ENCODE measurements at regions of chr11 and their contacts with region 1.

Region 1: DNA sequence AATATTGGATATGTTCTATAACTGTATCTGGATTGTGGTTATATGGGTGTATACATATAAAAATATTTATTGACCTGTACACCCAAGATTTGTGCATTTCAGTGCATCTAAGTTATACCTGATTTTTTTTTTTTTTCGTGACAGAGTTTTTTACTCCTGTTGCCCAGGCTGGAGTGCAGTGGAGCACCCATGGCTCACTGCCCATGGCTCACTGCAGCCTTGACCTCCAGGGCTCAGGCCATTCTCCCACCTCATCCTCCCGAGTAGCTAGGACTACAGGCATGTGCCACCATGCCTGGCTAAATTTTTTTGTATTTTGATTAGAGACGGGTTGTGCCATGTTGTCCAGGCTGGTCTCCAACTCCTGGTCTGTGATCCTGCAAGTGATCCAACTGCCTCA is 24.3 kb downstream of the ATG13 start:
- DNase-seq: no peak
- H3K4me3 ChIP-seq: no peak overlapping the region
- H3K27ac ChIP-seq: no peak overlapping the region
- H3K4me1 ChIP-seq: no peaks in the 10 kb centered on the region
- H3K27me3 ChIP-seq: no peaks in the 10 kb centered on the region
- CTCF ChIP-seq: no peak

Region 2: GRCh38 chr11:46469926-46470325 is 171.7 kb before region 1 on chr11:
- CTCF ChIA-PET with region 1: no interaction called
- POLR2A ChIA-PET with region 1: no interaction called
- intact Hi-C with region 1: no loop called
- DNase-seq: peak in 1 of 2 experiments; percentile 13
- H3K4me3 ChIP-seq: no peak overlapping the region
- H3K27ac ChIP-seq: no peak overlapping the region
- H3K4me1 ChIP-seq: peaks cover 26% of the 10 kb centered on the region
- H3K27me3 ChIP-seq: no peaks in the 10 kb centered on the region
- CTCF ChIP-seq: no peak

Region 3: DNA sequence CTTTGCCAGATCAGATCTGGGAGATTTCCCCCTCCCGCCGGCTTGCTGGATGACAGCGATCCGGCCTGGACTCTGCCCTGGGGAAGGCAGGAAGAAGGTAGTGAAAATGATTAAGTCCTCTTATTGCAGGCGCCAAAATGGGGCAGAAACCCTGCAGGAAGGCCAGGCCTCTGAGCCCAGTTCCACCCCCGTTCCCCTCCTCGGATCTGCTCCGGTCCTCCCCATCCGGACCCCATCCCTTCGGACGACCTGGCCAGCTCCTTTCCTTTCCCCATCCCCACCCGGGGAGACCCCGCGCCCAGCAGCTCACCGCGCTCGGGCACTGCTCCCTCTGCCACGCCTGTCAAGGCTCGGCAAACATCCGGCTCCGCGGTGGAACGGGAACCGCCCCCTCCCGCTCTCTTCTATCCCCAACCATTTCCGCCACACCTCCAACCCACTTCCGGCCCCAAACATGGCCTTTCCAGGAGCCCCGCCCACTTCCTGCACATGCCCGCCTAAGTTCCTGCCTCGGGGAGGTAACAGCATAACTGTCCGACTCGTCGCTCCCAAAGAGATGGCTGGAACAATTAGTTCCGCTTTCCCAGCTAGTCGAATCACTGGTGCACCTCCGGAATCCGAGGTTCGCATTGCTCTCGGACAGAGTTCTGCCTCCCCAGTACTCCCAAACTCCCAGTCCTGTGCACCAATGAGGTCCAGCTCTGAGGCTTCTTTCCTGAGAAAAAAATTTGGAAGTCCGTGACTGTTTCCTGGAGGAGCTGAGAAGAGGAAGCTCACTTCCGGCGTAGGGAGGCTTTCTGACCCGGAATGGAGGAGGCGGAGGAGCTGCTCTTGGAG is 58.8 kb after region 1 on chr11 and contains the starts of genes ARHGAP1 and ZNF408:
- CTCF ChIA-PET with region 1: no interaction called
- POLR2A ChIA-PET with region 1: interaction called, 15 read pairs
- intact Hi-C with region 1: no loop called
- DNase-seq: peak; percentile 96 to 99
- H3K4me3 ChIP-seq: peak within 1 kb of the TSS; percentile 61
- H3K27ac ChIP-seq: peak within 1 kb of the TSS; percentile 64
- H3K4me1 ChIP-seq: peaks cover 13% of the 10 kb centered on the region
- H3K27me3 ChIP-seq: no peaks in the 10 kb centered on the region
- CTCF ChIP-seq: no peak
- total RNA-seq, gene ARHGAP1: 60.3 and 64.2 TPM in 2 replicates
- total RNA-seq, gene ZNF408: 13.8 and 16.2 TPM in 2 replicates

Region 4: GRCh38 chr11:46710821-46711269 is 69.2 kb after region 1 on chr11:
- CTCF ChIA-PET with region 1: no interaction called
- POLR2A ChIA-PET with region 1: no interaction called
- intact Hi-C with region 1: no loop called
- DNase-seq: no peak
- H3K4me3 ChIP-seq: no peak overlapping the region
- H3K27ac ChIP-seq: no peak overlapping the region
- H3K4me1 ChIP-seq: peaks cover 14% of the 10 kb centered on the region
- H3K27me3 ChIP-seq: no peaks in the 10 kb centered on the region
- CTCF ChIP-seq: no peak

Region 5: GRCh38 chr11:46721286-46721685 is 79.6 kb after region 1 on chr11:
- CTCF ChIA-PET with region 1: no interaction called
- POLR2A ChIA-PET with region 1: no interaction called
- intact Hi-C with region 1: no loop called
- DNase-seq: no peak
- H3K4me3 ChIP-seq: no peak overlapping the region
- H3K27ac ChIP-seq: no peak overlapping the region
- H3K4me1 ChIP-seq: peaks cover 14% of the 10 kb centered on the region
- H3K27me3 ChIP-seq: no peaks in the 10 kb centered on the region
- CTCF ChIP-seq: no peak

Measured in PC-9 (cell line).